ENCODE measurements at regions of chr3 and their contacts with region 1.

Region 1: GRCh38 chr3:84141571-84141970 is 817.2 kb upstream of the CADM2 start:
- DNase-seq: no peak
- H3K4me3 ChIP-seq: no peak overlapping the region
- H3K27ac ChIP-seq: no peak overlapping the region
- H3K4me1 ChIP-seq: no peaks in the 10 kb centered on the region
- H3K27me3 ChIP-seq: no peaks in the 10 kb centered on the region
- CTCF ChIP-seq: no peak
- EP300 ChIP-seq: no peak
- POLR2A ChIP-seq: no peak

Region 2: DNA sequence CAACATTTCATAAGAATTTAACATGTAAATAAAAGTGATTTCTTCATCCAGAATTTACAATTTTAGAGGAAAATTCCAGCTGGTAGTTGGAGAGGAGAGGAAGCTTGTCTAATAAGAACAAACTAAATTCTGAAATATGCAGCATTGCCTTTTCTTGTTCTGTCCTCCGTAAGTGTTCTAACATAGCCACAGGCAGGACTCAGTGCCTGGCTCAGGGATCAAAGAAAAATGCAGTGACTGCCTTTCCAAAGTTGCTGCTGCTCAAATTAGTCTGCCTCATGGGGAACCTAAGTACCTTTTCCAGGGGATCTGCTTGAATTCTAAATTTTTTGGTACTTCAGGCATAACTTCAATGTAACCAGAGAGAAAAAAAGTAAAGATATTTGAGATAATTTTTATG is 104.2 kb after region 1 on chr3:
- in situ Hi-C with region 1: no loop called
- intact Hi-C with region 1: no loop called
- DNase-seq: no peak
- H3K4me3 ChIP-seq: no peak overlapping the region
- H3K27ac ChIP-seq: no peak overlapping the region
- H3K4me1 ChIP-seq: no peaks in the 10 kb centered on the region
- H3K27me3 ChIP-seq: no peaks in the 10 kb centered on the region
- CTCF ChIP-seq: no peak
- EP300 ChIP-seq: no peak
- POLR2A ChIP-seq: no peak

Region 3: GRCh38 chr3:84666468-84666867 is 524.9 kb after region 1 on chr3:
- in situ Hi-C with region 1: no loop called
- intact Hi-C with region 1: loop called (anchors 5 kb)
- DNase-seq: no peak
- H3K4me3 ChIP-seq: no peak overlapping the region
- H3K27ac ChIP-seq: no peak overlapping the region
- H3K4me1 ChIP-seq: no peaks in the 10 kb centered on the region
- H3K27me3 ChIP-seq: no peaks in the 10 kb centered on the region
- CTCF ChIP-seq: no peak
- EP300 ChIP-seq: no peak
- POLR2A ChIP-seq: no peak

Region 4: DNA sequence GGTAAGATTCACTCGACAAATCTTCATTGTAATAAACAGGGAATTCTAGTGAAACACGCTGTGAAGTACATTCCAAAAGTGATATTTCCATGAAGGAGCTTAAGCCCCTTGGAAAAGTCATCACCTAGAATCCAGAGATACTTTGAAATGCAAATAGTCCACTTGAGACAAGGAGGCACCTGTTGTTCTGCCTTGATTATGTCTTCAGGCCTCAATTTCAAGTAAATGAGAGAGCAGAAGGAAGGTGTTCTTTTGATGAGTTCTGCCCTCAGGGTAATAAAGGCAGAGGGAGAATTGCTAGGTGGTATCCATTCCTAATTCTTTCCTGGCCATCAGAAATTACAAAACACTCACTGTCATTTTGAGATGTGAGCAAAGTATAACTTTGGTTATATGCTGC is 979.3 kb after region 1 on chr3:
- in situ Hi-C with region 1: no loop called
- intact Hi-C with region 1: loop called (anchors 5 kb)
- DNase-seq: no peak
- H3K4me3 ChIP-seq: no peak overlapping the region
- H3K27ac ChIP-seq: no peak overlapping the region
- H3K4me1 ChIP-seq: no peaks in the 10 kb centered on the region
- H3K27me3 ChIP-seq: no peaks in the 10 kb centered on the region
- CTCF ChIP-seq: no peak
- EP300 ChIP-seq: no peak
- POLR2A ChIP-seq: no peak